Sigmoid colon (tissue), 7 donors: ENCODE measurements at regions of chr16 and their contacts with region 1.

Region 1: DNA sequence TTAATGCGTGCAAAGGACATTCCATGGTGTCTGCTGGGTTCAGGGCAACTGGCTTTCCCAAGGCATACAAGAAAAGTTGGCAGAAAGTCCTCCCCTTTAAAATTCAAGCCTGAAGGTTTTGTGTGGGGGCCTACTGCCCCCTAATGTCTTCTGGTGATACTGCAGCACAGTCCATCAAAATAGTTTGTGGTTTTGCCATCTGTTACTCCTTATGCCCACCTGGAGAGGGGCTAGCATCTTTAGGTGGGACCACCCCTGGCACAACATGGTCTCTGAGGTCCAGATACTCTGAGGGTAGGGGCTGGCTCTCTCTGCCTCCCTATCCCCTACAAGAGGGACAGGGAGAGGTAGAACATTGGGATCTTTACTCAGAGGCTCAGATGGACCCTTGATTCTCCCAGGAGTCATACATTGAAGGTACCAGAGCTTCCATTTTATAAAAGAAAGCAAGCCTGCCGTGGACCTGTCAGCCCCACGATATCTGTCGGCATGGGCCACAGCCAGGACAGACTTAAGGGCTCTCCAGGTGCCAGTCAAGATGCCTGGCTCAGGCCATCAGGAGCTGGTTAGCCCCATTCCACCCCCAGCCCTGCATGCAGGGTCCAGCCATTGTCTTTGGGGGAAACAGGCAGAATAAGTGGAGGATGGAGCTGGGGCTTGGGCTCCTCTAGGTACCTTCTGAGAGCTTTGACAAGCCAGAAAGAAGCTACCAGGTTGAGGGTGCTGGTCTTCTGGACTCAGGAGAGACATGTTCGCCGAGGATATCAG is 6.3 kb downstream of the ESRP2 start:
- DNase-seq: peak; percentile 70
- H3K4me3 ChIP-seq: no peak overlapping the region
- H3K27ac ChIP-seq: peak overlapping the region in 1 of 4 donors; percentile 35
- H3K4me1 ChIP-seq: peaks cover 0 to 11% (median 4%) of the 10 kb centered on the region in 4 donors
- H3K27me3 ChIP-seq: no peaks in the 10 kb centered on the region
- CTCF ChIP-seq: peak; percentile 70 to 87 (median 78)
- EP300 ChIP-seq: no peak
- POLR2A ChIP-seq: no peak

Region 2: GRCh38 chr16:67993189-67994039 is 236.2 kb before region 1 on chr16:
- intact Hi-C with region 1: loop called (anchors 1 kb)
- DNase-seq: peak; percentile 90
- H3K4me3 ChIP-seq: peak overlapping the region in 3 of 4 donors; percentile 25 to 42 (median 41)
- H3K27ac ChIP-seq: peak overlapping the region; percentile 46 to 60 (median 48)
- H3K4me1 ChIP-seq: peaks cover 0 to 12% (median 11%) of the 10 kb centered on the region in 4 donors
- H3K27me3 ChIP-seq: no peaks in the 10 kb centered on the region
- CTCF ChIP-seq: peak; percentile 93 to 100 (median 94)
- EP300 ChIP-seq: no peak
- POLR2A ChIP-seq: no peak

Region 3: GRCh38 chr16:68085259-68086071 is 144.2 kb before region 1 on chr16 and contains the start of gene NFATC3:
- intact Hi-C with region 1: loop called (anchors 2 kb)
- DNase-seq: peak; percentile 99
- H3K4me3 ChIP-seq: peak within 1 kb of the TSS; percentile 57 to 97 (median 80)
- H3K27ac ChIP-seq: peak within 1 kb of the TSS; percentile 91 to 99 (median 94)
- H3K4me1 ChIP-seq: peaks cover 0 to 46% (median 26%) of the 10 kb centered on the region in 4 donors
- H3K27me3 ChIP-seq: no peaks in the 10 kb centered on the region
- CTCF ChIP-seq: no peak
- EP300 ChIP-seq: no peak
- POLR2A ChIP-seq: no peak
- total RNA-seq, gene NFATC3: 42.8 to 52.2 (median 46.0) TPM

Region 4: DNA sequence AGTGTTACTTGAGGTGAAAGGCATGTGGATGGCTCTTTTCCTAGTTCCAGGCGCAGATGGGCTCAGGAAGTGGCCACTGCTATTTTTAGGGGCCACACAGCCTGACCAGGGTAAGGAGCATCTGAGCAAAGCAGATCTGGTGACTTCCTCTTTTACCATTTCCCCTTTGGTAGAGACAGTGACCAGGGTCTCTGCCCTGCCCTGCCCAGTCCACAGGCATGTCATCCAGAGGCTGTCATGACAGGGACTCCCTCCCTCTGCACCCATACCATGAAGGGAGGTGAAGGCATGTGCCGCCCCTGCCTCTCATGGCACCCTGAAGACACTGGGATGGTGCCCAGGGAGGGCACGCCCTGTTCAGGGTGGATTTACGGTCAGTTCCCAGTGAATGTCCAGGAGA is 17.8 kb after region 1 on chr16:
- intact Hi-C with region 1: no loop called
- DNase-seq: no peak
- H3K4me3 ChIP-seq: no peak overlapping the region
- H3K27ac ChIP-seq: peak overlapping the region in 2 of 4 donors; percentile 16 to 38
- H3K4me1 ChIP-seq: peaks cover 0 to 42% (median 33%) of the 10 kb centered on the region in 4 donors
- H3K27me3 ChIP-seq: no peaks in the 10 kb centered on the region
- CTCF ChIP-seq: no peak
- EP300 ChIP-seq: no peak
- POLR2A ChIP-seq: no peak

Region 5: GRCh38 chr16:68264128-68265077 is 34.8 kb after region 1 on chr16 and contains the start of gene SLC7A6:
- intact Hi-C with region 1: no loop called
- DNase-seq: peak; percentile 85
- H3K4me3 ChIP-seq: peak within 1 kb of the TSS; percentile 78 to 84 (median 82)
- H3K27ac ChIP-seq: peak within 1 kb of the TSS; percentile 97 to 99 (median 98)
- H3K4me1 ChIP-seq: peaks cover 0 to 39% (median 32%) of the 10 kb centered on the region in 4 donors
- H3K27me3 ChIP-seq: no peaks in the 10 kb centered on the region
- CTCF ChIP-seq: peak; percentile 19 to 62 (median 60)
- EP300 ChIP-seq: no peak
- POLR2A ChIP-seq: no peak
- total RNA-seq, gene SLC7A6: 26.8 to 40.7 (median 35.1) TPM